ENCODE measurements at regions of chr9 and their contacts with region 1.

Region 1: GRCh38 chr9:97052735-97053134 is 13.8 kb upstream of the CTSV start:
- DNase-seq: no peak
- ATAC-seq: no peak
- H3K4me3 Mint-ChIP-seq: peak overlapping the region; percentile 48; the same call in 1 of the 2 replicates
- H3K27ac Mint-ChIP-seq: peak overlapping the region; percentile 95
- H3K4me1 Mint-ChIP-seq: peaks cover 45% of the 10 kb centered on the region
- H3K27me3 Mint-ChIP-seq: peaks cover under 1% of the 10 kb centered on the region
- CTCF ChIP-seq: no peak

Region 2: GRCh38 chr9:97038909-97039781 is 13.6 kb before region 1 on chr9 and contains the start of gene CTSV:
- CTCF ChIA-PET with region 1: interaction called, 6 read pairs
- POLR2A ChIA-PET with region 1: interaction called, 14 read pairs
- DNase-seq: peak; percentile 96
- ATAC-seq: peak; percentile 97
- H3K4me3 Mint-ChIP-seq: peak within 1 kb of the TSS; percentile 92
- H3K27ac Mint-ChIP-seq: peak within 1 kb of the TSS; percentile 98
- H3K4me1 Mint-ChIP-seq: peaks cover 17% of the 10 kb centered on the region
- H3K27me3 Mint-ChIP-seq: peaks cover 35% of the 10 kb centered on the region
- CTCF ChIP-seq: no peak
- total RNA-seq, gene CTSV: 61.3 to 68.4 TPM (median 64.5 TPM) in 3 replicates

Region 3: DNA sequence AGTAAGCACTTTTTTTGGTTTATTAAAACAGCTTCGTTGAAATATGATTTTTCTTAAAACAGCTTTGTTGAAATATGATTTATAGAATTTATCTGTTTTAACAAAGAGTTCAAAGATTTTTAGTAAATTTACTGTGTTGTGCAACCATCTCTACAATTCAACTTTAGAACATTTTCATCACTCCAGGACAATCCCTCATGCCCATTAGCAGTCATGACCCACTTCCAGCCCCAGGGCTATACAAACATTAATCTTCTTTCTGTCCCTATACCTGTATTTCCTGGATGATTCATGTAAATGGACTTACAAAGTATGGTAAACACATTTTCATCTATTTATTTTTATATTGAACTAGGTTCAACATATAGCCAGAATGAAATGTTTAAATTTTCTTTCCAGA is 126.8 kb after region 1 on chr9:
- CTCF ChIA-PET with region 1: no interaction called
- POLR2A ChIA-PET with region 1: no interaction called
- DNase-seq: no peak
- ATAC-seq: no peak
- H3K4me3 Mint-ChIP-seq: no peak overlapping the region
- H3K27ac Mint-ChIP-seq: no peak overlapping the region
- H3K4me1 Mint-ChIP-seq: no peaks in the 10 kb centered on the region
- H3K27me3 Mint-ChIP-seq: no peaks in the 10 kb centered on the region
- CTCF ChIP-seq: no peak